Heart right ventricle (tissue), 16 donors: ENCODE measurements at regions of chr21 and their contacts with region 1.

Region 1: DNA sequence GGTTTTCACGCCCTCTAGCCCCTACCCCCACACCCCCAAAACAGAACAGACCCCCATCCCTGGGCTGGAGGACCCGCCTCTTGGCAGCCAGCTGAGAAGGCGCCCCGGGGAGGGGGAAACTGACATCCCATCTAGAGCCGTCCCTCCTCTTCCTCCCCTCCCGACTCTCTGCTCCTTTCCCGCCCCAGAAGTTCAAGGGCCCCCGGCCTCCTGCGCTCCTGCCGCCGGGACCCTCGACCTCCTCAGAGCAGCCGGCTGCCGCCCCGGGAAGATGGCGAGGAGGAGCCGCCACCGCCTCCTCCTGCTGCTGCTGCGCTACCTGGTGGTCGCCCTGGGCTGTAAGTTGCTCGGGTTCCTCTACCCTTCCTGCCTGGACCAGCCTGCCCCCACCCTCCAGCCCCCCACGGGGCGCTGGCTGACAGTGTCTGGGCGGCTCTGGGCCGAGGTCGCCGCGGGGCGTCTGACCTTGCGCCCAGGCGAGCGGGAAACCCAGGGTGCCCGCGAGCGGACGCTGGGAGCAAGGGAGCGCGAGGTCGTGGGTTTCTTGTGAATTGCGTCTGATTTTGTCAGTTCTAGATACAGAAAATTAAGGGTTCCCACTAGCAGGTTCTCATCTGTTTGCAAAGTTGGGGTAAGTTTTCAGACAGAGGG is 618 bp downstream of the JAM2 start:
- DNase-seq: peak; percentile 58 to 59
- ATAC-seq: peak; percentile 78 to 92 (median 84)
- H3K4me3 ChIP-seq: peak overlapping the region; percentile 61 to 93 (median 79)
- H3K27ac ChIP-seq: peak overlapping the region; percentile 77 to 98 (median 90)
- H3K4me1 ChIP-seq: peaks cover 0 to 47% (median 22%) of the 10 kb centered on the region in 9 donors
- H3K27me3 ChIP-seq: peaks cover 0 to 32% (median 0%) of the 10 kb centered on the region in 7 donors
- CTCF ChIP-seq: peak in 8 of 9 donors; percentile 20 to 66 (median 48)

Region 2: DNA sequence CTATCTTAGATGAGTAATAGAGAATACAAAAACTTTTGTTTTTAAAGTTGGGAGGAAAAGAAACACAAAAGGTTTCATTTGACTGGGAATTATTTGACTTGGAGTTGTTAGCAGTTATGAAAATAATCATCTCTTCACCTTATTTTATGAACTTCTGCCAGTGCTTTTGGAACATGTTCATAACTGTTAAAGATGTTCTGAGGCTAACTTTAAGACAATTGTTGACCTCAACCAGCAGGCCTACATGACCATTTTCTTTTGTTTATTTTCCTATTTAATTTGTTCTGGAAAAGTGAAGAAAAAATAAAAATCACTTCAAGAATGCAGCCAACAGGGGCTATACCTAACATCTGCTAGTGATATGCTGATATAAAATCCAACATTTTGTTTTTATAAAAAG is 36.8 kb after region 1 on chr21:
- intact Hi-C with region 1: loop called in 1 of 10 experiments (anchors 5 kb)
- DNase-seq: no peak
- ATAC-seq: no peak
- H3K4me3 ChIP-seq: no peak overlapping the region
- H3K27ac ChIP-seq: peak overlapping the region in 4 of 10 donors; percentile 13 to 74 (median 50)
- H3K4me1 ChIP-seq: peaks cover 0 to 48% (median 9%) of the 10 kb centered on the region in 9 donors
- H3K27me3 ChIP-seq: no peaks in the 10 kb centered on the region
- CTCF ChIP-seq: no peak

Region 3: DNA sequence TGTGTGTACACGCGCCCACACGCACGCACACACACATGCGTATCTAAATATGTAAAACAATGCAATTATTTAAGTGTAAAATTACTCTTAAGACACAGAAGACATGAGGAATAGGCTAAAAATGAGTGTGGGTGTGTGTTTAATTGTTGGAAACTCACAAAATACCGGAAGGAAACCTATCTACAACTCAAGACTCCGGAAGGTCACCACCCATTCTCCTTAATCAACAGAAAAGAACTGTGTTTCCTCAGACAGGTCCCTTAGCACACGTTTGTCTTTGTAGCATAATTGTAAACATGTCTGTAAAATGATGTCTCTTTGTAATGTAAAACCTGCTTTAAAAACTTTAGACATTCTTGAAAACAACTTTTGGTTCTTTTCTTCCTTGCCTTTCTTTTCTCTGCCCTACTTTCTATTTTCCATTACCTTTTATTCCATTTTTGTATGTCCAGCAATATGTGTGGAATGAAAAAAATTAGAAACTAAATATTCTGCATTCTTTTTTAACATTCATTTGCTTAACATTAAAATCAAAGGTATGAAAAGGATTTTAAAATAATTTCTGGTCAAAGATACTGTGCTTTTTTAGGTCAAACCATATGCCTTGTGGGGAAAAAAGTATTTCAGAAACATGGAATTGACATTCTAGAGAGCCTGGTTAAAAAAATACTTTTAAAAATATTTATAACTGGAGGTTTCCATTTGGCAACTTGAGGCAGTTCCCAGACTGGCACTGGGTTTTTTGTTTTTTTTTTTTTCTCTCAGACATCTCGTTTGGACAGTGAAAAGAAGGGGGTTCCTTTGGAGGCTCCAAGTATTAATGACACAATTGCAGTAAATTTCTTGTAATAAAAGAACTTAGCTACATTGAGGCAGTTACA is 48.8 kb after region 1 on chr21:
- intact Hi-C with region 1: loop called in 1 of 10 experiments (anchors 5 kb)
- DNase-seq: no peak
- ATAC-seq: peak in 7 of 8 donors; percentile 73 to 91 (median 79)
- H3K4me3 ChIP-seq: no peak overlapping the region
- H3K27ac ChIP-seq: peak overlapping the region in 9 of 10 donors; percentile 36 to 79 (median 63)
- H3K4me1 ChIP-seq: peaks cover 0 to 71% (median 19%) of the 10 kb centered on the region in 9 donors
- H3K27me3 ChIP-seq: no peaks in the 10 kb centered on the region
- CTCF ChIP-seq: no peak

Region 4: GRCh38 chr21:25708467-25709065 is 68.9 kb after region 1 on chr21:
- intact Hi-C with region 1: loop called in 3 of 10 experiments (anchors 5 kb)
- DNase-seq: peak in 1 of 2 donors; percentile 43
- ATAC-seq: peak in 1 of 8 donors; percentile 26
- H3K4me3 ChIP-seq: no peak overlapping the region
- H3K27ac ChIP-seq: no peak overlapping the region
- H3K4me1 ChIP-seq: peaks cover 0 to 32% (median 8%) of the 10 kb centered on the region in 9 donors
- H3K27me3 ChIP-seq: no peaks in the 10 kb centered on the region
- CTCF ChIP-seq: peak; percentile 79 to 93 (median 85)

Region 5: DNA sequence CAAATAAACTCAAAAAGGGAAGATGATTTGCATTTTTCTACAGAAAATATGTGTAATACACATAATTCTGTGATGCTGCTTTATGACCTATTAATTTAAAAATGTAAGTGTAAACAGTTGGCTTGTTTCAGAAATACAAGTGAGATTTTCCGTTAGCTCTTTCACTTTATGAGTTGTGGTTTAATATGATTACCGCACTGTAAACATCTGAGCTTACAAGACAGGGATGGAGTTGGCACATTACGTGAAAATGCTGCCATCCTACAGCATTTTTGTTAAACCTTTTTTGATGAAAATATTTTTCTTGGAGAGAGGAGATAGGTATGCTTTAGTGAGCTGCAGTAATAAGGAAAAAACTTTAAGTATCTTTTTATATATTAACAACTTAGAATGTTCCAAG is 1754.0 kb after region 1 on chr21:
- intact Hi-C with region 1: no loop called
- DNase-seq: no peak
- ATAC-seq: no peak
- H3K4me3 ChIP-seq: no peak overlapping the region
- H3K27ac ChIP-seq: no peak overlapping the region
- H3K4me1 ChIP-seq: peaks cover 0 to 12% (median 0%) of the 10 kb centered on the region in 9 donors
- H3K27me3 ChIP-seq: no peaks in the 10 kb centered on the region
- CTCF ChIP-seq: no peak